ENCODE measurements at regions of chr1 and their contacts with region 1.

Region 1: DNA sequence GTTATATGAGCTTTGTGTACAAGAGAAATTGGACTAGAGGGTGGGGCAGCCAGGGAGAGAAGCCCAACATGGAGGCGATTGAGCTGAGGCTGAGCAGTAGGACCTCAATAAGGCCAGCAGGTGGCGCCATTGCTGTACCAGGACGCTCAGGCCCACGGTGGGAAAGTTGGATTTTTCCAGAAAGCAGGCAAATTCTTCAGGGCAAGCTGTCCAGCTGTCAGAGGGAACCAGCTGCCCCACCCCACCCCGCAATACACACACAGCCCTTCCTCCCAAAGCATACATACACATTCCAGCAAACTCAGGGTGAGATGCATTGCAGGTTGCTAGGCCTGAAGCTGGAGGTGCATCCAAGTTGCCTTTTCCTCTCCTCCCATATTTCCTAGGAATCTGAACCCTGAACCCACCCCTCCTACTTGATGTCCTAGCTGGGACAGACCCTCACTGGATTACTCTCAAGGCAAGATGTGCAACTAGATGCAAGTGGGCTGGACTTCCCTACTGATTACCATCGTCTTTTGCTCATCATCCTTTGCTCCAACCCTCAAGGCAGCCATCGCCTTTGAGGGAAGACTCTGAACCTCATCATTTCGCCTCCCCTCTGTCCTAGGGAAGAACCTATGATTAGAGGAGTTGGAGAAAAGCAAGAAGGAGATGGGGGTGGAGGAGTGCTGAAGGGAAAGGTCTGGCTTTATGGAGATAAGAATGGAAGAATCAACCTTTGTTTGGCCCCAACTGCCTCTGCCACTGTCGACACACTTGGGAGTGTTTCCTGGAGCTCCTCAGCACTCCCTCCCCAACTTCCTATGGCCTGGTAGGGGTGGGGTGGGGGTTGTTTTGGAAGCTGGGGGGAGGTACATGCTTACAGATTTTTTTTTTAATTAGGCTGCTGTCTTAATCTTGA is 25.5 kb downstream of the CD34 start:
- DNase-seq: peak; percentile 92
- ATAC-seq: peak; percentile 92

Region 2: GRCh38 chr1:207963427-207964194 is 78.2 kb after region 1 on chr1:
- intact Hi-C with region 1: loop called (anchors 5 kb)
- DNase-seq: peak; percentile 95
- ATAC-seq: peak; percentile 89

Measured in sciatic nerve (tissue), 2 donors.